ENCODE measurements at regions of chr6 and their contacts with region 1.

Region 1: DNA sequence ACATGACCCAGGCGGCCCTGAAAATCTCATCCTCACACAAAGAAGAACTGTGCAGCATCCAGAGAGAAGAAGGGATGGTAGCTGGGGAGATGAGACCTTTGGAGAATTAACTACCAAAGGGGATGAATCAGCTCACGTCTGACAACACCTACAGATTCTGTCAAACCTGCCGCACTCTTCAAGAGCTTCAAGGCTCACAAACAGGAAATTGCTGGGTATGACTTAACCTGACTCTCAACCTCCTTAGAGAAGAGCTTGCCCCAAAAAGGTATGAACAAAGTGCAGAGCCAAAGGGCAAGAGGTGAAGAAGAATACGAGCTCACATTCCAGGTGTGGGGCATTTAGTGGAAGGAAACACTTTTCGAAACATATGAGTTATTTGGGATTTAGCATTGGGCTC is 139.8 kb downstream of the BACH2 start:
- DNase-seq: peak in 8 of 9 experiments; percentile 15 to 78 (median 51)
- ATAC-seq: peak; percentile 98
- H3K4me3 ChIP-seq: peak overlapping the region in 1 of 2 experiments; percentile 14
- H3K4me3 Mint-ChIP-seq: peak overlapping the region; percentile 32
- H3K27ac ChIP-seq: peak overlapping the region; percentile 18 to 47
- H3K27ac Mint-ChIP-seq: peak overlapping the region; percentile 94
- H3K4me1 ChIP-seq: peaks cover 76% of the 10 kb centered on the region
- H3K4me1 Mint-ChIP-seq: peaks cover 82% of the 10 kb centered on the region
- H3K27me3 ChIP-seq: no peaks in the 10 kb centered on the region
- H3K27me3 Mint-ChIP-seq: no peaks in the 10 kb centered on the region
- CTCF ChIP-seq: no peak

Region 2: GRCh38 chr6:90140683-90141082 is 16.2 kb before region 1 on chr6:
- CTCF ChIA-PET with region 1: no interaction called
- POLR2A ChIA-PET with region 1: interaction called, 5 read pairs
- intact Hi-C with region 1: loop called in 1 of 2 experiments (anchors 2 kb)
- DNase-seq: no peak
- ATAC-seq: no peak
- H3K4me3 ChIP-seq: no peak overlapping the region
- H3K4me3 Mint-ChIP-seq: no peak overlapping the region
- H3K27ac ChIP-seq: no peak overlapping the region
- H3K27ac Mint-ChIP-seq: no peak overlapping the region
- H3K4me1 ChIP-seq: peaks cover 55% of the 10 kb centered on the region
- H3K4me1 Mint-ChIP-seq: peaks cover 65% of the 10 kb centered on the region
- H3K27me3 ChIP-seq: no peaks in the 10 kb centered on the region
- H3K27me3 Mint-ChIP-seq: no peaks in the 10 kb centered on the region
- CTCF ChIP-seq: no peak

Region 3: GRCh38 chr6:90170601-90171000 is 13.7 kb after region 1 on chr6:
- CTCF ChIA-PET with region 1: interaction called, 7 read pairs
- POLR2A ChIA-PET with region 1: interaction called, 5 read pairs
- intact Hi-C with region 1: loop called in 1 of 2 experiments (anchors 2 kb)
- DNase-seq: no peak
- ATAC-seq: no peak
- H3K4me3 ChIP-seq: no peak overlapping the region
- H3K4me3 Mint-ChIP-seq: no peak overlapping the region
- H3K27ac ChIP-seq: no peak overlapping the region
- H3K27ac Mint-ChIP-seq: no peak overlapping the region
- H3K4me1 ChIP-seq: peaks cover 39% of the 10 kb centered on the region
- H3K4me1 Mint-ChIP-seq: peaks cover 56% of the 10 kb centered on the region
- H3K27me3 ChIP-seq: no peaks in the 10 kb centered on the region
- H3K27me3 Mint-ChIP-seq: no peaks in the 10 kb centered on the region
- CTCF ChIP-seq: no peak

Measured in CD8-positive, alpha-beta T cell (primary cell).